PC-3 (cell line): ENCODE measurements at regions of chr15 and their contacts with region 1.

Region 1: DNA sequence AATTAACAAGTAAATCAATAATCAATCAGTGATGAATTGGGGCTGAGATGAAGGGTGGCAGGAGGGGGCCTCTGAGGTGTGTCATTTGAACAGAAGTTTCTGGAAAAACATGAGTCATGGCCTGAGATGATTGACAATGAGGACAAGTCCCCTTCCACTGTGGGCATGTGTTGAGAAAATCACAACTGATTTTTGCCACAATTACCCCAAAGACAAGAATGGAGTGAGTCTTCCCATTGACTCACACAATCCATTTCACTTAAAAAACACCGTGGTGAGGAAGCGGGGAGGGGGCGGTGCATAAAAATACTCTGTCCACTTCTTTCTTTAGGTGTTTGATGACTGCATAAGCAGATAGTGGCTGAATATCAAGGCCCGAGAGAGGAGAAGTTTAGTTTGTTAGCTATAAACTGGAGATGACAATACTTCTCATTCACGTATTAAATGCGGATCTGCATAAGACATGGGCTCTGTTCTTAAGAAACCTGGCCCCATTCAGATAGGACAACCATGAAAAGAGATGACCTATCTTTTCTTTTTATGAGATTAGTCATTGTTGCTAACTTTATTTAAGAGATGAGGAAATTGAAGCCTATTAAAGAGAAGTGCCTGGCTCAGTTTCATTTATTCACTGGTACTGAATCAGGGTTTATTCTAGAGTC is 34.7 kb downstream of the SHC4 start:
- DNase-seq: peak; percentile 70
- ATAC-seq: peak; percentile 67
- H3K4me3 ChIP-seq: peak overlapping the region; percentile 43
- H3K27ac ChIP-seq: peak overlapping the region; percentile 98
- H3K4me1 ChIP-seq: peaks cover 43% of the 10 kb centered on the region
- H3K27me3 ChIP-seq: no peaks in the 10 kb centered on the region
- CTCF ChIP-seq: no peak

Region 2: DNA sequence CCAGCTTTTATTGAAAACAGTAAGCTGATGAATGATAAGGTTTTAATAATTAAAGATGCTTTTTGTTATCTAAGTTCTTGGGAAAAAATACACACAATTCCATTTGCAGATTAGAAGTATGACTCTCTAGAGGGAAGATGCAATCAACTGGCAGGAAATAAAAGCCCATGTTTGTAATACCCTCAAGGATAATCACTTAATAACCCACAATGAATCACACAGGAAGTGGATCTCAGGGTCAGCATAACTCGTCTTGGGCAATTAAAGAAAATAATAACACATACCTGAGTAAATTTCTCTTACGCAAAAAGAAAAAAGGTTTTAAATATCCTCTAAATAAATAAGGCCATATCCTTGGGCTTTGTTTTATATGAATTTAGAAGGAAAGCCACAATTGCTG is 60.5 kb before region 1 on chr15:
- CTCF ChIA-PET with region 1: no interaction called
- POLR2A ChIA-PET with region 1: no interaction called
- intact Hi-C with region 1: loop called (anchors 2 kb)
- DNase-seq: peak; percentile 77
- ATAC-seq: peak; percentile 70
- H3K4me3 ChIP-seq: no peak overlapping the region
- H3K27ac ChIP-seq: peak overlapping the region; percentile 80
- H3K4me1 ChIP-seq: peaks cover 40% of the 10 kb centered on the region
- H3K27me3 ChIP-seq: no peaks in the 10 kb centered on the region
- CTCF ChIP-seq: no peak

Region 3: GRCh38 chr15:48877630-48878595 is 51.1 kb before region 1 on chr15 and contains the start of gene EID1:
- CTCF ChIA-PET with region 1: no interaction called
- POLR2A ChIA-PET with region 1: interaction called, 12 read pairs
- intact Hi-C with region 1: no loop called
- DNase-seq: peak; percentile 92
- ATAC-seq: peak; percentile 94
- H3K4me3 ChIP-seq: peak within 1 kb of the TSS; percentile 83
- H3K27ac ChIP-seq: peak within 1 kb of the TSS; percentile 68
- H3K4me1 ChIP-seq: peaks cover 24% of the 10 kb centered on the region
- H3K27me3 ChIP-seq: no peaks in the 10 kb centered on the region
- CTCF ChIP-seq: no peak
- total RNA-seq, gene EID1: 98.7 and 115 TPM in 2 replicates

Region 4: DNA sequence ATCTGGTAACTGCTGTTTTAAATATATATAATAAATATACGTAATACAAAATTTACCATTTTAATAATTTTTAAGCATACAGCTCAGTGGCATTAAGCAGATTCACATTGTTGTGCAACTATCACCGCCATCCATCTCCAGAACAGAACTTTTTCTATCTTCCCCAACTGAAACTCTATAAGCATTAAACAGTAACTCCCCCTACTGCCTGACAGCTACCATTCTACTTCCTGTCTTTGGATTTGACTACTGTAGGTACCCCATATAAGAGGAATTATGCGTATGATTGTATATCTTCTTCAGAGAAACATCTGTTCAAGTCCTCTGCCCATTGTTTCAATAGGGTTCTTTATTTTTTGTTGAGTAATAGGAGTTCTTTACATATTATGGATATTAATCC is 14.3 kb before region 1 on chr15:
- CTCF ChIA-PET with region 1: no interaction called
- POLR2A ChIA-PET with region 1: no interaction called
- intact Hi-C with region 1: loop called (anchors 2 kb)
- DNase-seq: no peak
- ATAC-seq: no peak
- H3K4me3 ChIP-seq: no peak overlapping the region
- H3K27ac ChIP-seq: no peak overlapping the region
- H3K4me1 ChIP-seq: peaks cover 7% of the 10 kb centered on the region
- H3K27me3 ChIP-seq: no peaks in the 10 kb centered on the region
- CTCF ChIP-seq: no peak

Region 5: GRCh38 chr15:48963524-48964113 is 34.6 kb after region 1 on chr15 and contains the start of gene SHC4:
- CTCF ChIA-PET with region 1: interaction called, 3 read pairs
- POLR2A ChIA-PET with region 1: no interaction called
- intact Hi-C with region 1: loop called (anchors 1 kb)
- DNase-seq: peak; percentile 75
- ATAC-seq: peak; percentile 48
- H3K4me3 ChIP-seq: peak within 1 kb of the TSS; percentile 81
- H3K27ac ChIP-seq: peak within 1 kb of the TSS; percentile 89
- H3K4me1 ChIP-seq: peaks cover 34% of the 10 kb centered on the region
- H3K27me3 ChIP-seq: no peaks in the 10 kb centered on the region
- CTCF ChIP-seq: peak; percentile 47
- total RNA-seq, gene SHC4: 2.4 and 4.3 TPM in 2 replicates

Region 6: GRCh38 chr15:49096090-49096750 is 167.2 kb after region 1 on chr15:
- CTCF ChIA-PET with region 1: no interaction called
- POLR2A ChIA-PET with region 1: no interaction called
- intact Hi-C with region 1: no loop called
- DNase-seq: no peak
- ATAC-seq: no peak
- H3K4me3 ChIP-seq: no peak overlapping the region
- H3K27ac ChIP-seq: no peak overlapping the region
- H3K4me1 ChIP-seq: no peaks in the 10 kb centered on the region
- H3K27me3 ChIP-seq: no peaks in the 10 kb centered on the region
- CTCF ChIP-seq: no peak

Region 7: DNA sequence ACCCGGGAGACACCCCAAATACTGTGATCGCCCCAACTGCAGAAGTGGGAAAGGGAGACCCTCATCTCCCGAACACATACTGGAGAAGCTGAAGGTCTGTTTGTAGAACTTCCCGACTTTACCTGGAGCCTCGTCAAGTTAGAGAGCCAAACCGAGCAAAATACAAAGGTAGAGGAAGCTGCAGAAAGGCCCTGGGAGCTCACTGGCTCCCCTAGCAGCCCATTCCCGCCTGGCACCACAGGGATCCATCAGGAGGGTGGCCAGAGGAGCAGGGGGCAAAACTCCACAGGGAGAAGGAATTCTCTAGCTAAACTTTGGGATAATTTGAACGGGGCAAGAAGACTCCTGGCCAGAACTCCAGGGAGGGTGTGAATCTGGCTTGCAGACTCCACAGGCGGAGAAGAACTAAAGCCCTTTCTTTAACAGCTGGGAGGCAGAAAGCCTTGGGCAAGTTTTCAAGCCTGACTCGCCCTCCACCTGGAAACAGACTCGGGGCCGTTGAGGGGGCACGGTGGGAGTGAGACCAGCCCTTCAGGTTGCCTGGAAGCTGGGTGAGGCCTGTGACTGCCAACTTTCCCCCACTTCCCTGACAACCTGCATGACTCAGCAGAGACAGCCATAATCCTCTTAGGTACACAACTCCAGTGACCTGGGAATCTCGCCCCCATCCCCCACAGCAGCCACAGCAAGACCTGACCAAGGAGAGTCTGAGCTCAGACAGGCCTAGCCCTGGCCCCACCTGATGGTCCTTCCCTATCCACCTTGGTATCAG is 1281.5 kb after region 1 on chr15:
- CTCF ChIA-PET with region 1: no interaction called
- POLR2A ChIA-PET with region 1: interaction called, 11 read pairs
- intact Hi-C with region 1: no loop called
- DNase-seq: peak; percentile 65
- ATAC-seq: peak; percentile 60
- H3K4me3 ChIP-seq: no peak overlapping the region
- H3K27ac ChIP-seq: peak overlapping the region; percentile 87
- H3K4me1 ChIP-seq: peaks cover 17% of the 10 kb centered on the region
- H3K27me3 ChIP-seq: no peaks in the 10 kb centered on the region
- CTCF ChIP-seq: no peak